ENCODE measurements at regions of chrX and their contacts with region 1.

Region 1: GRCh38 chrX:25144043-25144940 is 128.5 kb upstream of the ARX start:
- DNase-seq: peak; percentile 4 to 60
- ATAC-seq: peak; percentile 82 to 87
- H3K4me3 ChIP-seq: no peak overlapping the region
- H3K27ac ChIP-seq: no peak overlapping the region
- H3K4me1 ChIP-seq: no peaks in the 10 kb centered on the region
- CTCF ChIP-seq: peak; percentile 77
- EP300 ChIP-seq: no peak
- POLR2A ChIP-seq: no peak
- RAD21 ChIP-seq: peak; percentile 76 to 84

Region 2: DNA sequence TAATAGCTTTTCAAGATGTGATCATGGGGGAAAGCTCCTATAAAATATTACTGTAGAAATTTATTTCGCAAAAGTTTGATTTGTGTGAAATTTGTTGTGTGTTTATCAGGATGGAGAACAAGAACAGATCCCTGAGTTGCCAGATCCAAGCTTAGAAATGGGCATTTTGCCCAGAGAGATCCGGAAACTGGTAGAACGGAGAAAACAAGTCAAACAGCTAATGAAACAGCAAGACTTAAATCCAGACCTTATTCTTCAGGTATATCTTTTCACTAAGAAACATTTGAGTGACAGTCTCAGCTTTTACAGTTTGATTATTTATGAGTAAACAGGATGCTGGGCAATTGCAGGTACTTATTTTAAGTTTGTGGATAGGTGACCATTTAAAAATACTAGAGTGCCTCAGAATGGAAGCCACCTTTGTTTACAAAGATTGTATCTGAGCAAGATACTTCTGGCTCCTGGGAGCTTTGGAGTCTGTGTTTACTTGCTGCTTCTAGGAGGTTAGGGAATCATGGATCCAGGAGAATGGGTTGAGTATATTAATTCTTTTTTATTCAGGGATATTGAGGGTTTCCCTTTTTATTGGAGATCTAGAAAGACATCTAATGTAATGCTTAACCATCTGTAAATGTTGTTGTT is 396.0 kb before region 1 on chrX:
- CTCF ChIA-PET with region 1: interaction called, 30 read pairs
- POLR2A ChIA-PET with region 1: no interaction called
- DNase-seq: no peak
- ATAC-seq: no peak
- H3K4me3 ChIP-seq: no peak overlapping the region
- H3K27ac ChIP-seq: no peak overlapping the region
- H3K4me1 ChIP-seq: no peaks in the 10 kb centered on the region
- CTCF ChIP-seq: no peak
- EP300 ChIP-seq: no peak
- POLR2A ChIP-seq: no peak
- RAD21 ChIP-seq: no peak

Region 3: GRCh38 chrX:24838629-24839028 is 305.7 kb before region 1 on chrX:
- CTCF ChIA-PET with region 1: interaction called, 35 read pairs
- POLR2A ChIA-PET with region 1: no interaction called
- DNase-seq: peak in 1 of 2 experiments; percentile 31
- ATAC-seq: peak in 1 of 2 experiments; percentile 60; a peak in 2 of 6 replicates
- H3K4me3 ChIP-seq: no peak overlapping the region
- H3K27ac ChIP-seq: peak overlapping the region in 1 of 2 experiments; percentile 54; a peak in 2 of 6 replicates
- H3K4me1 ChIP-seq: peaks cover 16% of the 10 kb centered on the region; the same call in 2 of the 3 replicates
- CTCF ChIP-seq: peak; percentile 73
- EP300 ChIP-seq: no peak
- POLR2A ChIP-seq: no peak
- RAD21 ChIP-seq: peak; percentile 56 to 75

Region 4: GRCh38 chrX:25020905-25021449 is 123.3 kb before region 1 on chrX:
- CTCF ChIA-PET with region 1: interaction called, 14 read pairs
- POLR2A ChIA-PET with region 1: no interaction called
- DNase-seq: peak in 1 of 2 experiments; percentile 80
- ATAC-seq: peak; percentile 85 to 91
- H3K4me3 ChIP-seq: peak overlapping the region; percentile 52
- H3K27ac ChIP-seq: peak overlapping the region; percentile 39 to 77; a peak in 5 of 6 replicates
- H3K4me1 ChIP-seq: peaks cover 14% of the 10 kb centered on the region
- CTCF ChIP-seq: peak; percentile 84
- EP300 ChIP-seq: no peak
- POLR2A ChIP-seq: no peak
- RAD21 ChIP-seq: peak; percentile 47 to 79

Region 5: DNA sequence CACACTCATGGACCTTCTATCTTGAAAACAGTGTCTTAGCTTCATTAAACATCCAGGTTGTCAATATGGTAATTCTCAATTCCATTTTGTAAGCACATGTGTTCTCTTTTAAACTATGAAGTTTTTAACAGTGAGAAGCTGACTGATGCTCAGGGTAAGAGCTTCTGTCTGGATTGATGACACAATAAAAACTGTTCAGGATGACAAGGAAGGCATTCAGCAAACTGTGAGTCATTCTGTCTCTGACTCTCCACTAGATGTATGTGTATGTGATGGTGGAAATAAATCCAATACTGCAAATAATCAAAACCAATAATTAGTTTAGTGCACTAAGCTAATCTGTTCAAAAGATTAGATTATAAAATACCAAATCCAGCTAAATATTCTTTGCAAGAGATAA is 13.2 kb before region 1 on chrX:
- CTCF ChIA-PET with region 1: interaction called, 13 read pairs
- POLR2A ChIA-PET with region 1: no interaction called
- DNase-seq: peak; percentile 0 to 2
- ATAC-seq: peak in 1 of 2 experiments; percentile 43; a peak in 1 of 6 replicates
- H3K4me3 ChIP-seq: no peak overlapping the region
- H3K27ac ChIP-seq: no peak overlapping the region
- H3K4me1 ChIP-seq: no peaks in the 10 kb centered on the region
- CTCF ChIP-seq: no peak
- EP300 ChIP-seq: no peak
- POLR2A ChIP-seq: no peak
- RAD21 ChIP-seq: no peak